ENCODE measurements at regions of chr2 and their contacts with region 1.

Region 1: DNA sequence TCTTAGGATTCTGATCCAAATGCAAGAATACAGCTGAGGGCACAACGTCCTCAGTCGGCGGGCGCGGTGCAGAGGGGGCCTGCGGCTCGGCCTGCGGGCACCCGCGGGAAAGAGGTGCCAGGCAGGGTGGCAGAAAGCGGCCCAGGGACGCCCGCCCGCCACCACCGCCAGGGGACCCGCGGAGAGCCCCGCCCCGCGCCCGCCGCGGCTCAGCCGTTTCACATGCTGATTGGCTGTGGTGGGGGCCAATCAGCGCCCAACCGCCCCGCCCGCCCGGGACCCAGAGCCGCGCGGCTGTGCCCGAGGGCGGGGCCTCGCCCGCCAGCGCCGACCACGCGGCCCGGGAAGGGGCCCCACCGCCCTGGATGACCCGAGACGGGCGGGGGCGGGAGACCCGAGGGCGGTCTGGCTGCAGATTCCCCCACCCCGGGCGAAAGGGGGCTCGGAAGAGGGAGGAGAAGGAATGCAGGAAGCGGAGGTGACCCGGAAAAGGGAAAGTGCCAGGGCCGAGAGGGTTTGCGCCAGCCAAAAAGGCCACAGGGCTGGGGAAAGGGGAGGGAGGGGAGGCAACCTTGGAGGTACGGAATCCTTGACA is 8.0 kb downstream of the IRS1 start:
- DNase-seq: peak; percentile 96
- H3K4me3 ChIP-seq: peak overlapping the region; percentile 75
- H3K27ac ChIP-seq: peak overlapping the region; percentile 90
- H3K4me1 ChIP-seq: peaks cover 52% of the 10 kb centered on the region
- H3K27me3 ChIP-seq: no peaks in the 10 kb centered on the region

Region 2: GRCh38 chr2:226190479-226191252 is 600.9 kb before region 1 on chr2:
- in situ Hi-C with region 1: loop called (anchors 10 kb)
- DNase-seq: no peak
- H3K4me3 ChIP-seq: no peak overlapping the region
- H3K27ac ChIP-seq: no peak overlapping the region
- H3K4me1 ChIP-seq: peaks cover 27% of the 10 kb centered on the region
- H3K27me3 ChIP-seq: no peaks in the 10 kb centered on the region

Region 3: GRCh38 chr2:226423498-226423960 is 368.1 kb before region 1 on chr2:
- in situ Hi-C with region 1: loop called (anchors 10 kb)
- DNase-seq: peak; percentile 59
- H3K4me3 ChIP-seq: no peak overlapping the region
- H3K27ac ChIP-seq: no peak overlapping the region
- H3K4me1 ChIP-seq: peaks cover 48% of the 10 kb centered on the region
- H3K27me3 ChIP-seq: no peaks in the 10 kb centered on the region

Region 4: GRCh38 chr2:226906163-226906693 is 114.6 kb after region 1 on chr2:
- in situ Hi-C with region 1: no loop called
- DNase-seq: no peak
- H3K4me3 ChIP-seq: no peak overlapping the region
- H3K27ac ChIP-seq: no peak overlapping the region
- H3K4me1 ChIP-seq: peaks cover 23% of the 10 kb centered on the region
- H3K27me3 ChIP-seq: no peaks in the 10 kb centered on the region

Region 5: DNA sequence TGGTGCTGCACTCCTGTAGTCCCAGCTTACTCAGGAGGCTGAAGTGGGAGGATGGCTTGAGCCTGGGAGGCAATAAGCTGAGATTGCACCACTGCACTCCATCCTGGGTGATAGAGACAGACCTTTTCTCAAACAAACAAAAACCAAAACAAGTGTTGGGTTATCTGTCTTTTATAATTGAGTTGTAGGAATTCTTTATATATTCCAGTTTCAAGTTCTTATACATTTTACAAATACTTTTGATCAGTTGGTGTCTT is 727.4 kb after region 1 on chr2:
- in situ Hi-C with region 1: no loop called
- DNase-seq: no peak
- H3K4me3 ChIP-seq: no peak overlapping the region
- H3K27ac ChIP-seq: peak overlapping the region; percentile 8
- H3K4me1 ChIP-seq: peaks cover 36% of the 10 kb centered on the region
- H3K27me3 ChIP-seq: no peaks in the 10 kb centered on the region

Measured in GM23248 (cell line).